ENCODE measurements at regions of chr18 and their contacts with region 1.

Region 1: GRCh38 chr18:46411867-46412690 is 244.9 kb downstream of the LOXHD1 start:
- DNase-seq: no peak
- H3K4me3 ChIP-seq: no peak overlapping the region; a peak in 1 of 8 replicates
- H3K27ac ChIP-seq: no peak overlapping the region
- H3K4me1 ChIP-seq: peaks cover 20 to 38% (median 26%) of the 10 kb centered on the region in 4 experiments
- H3K27me3 ChIP-seq: no peaks in the 10 kb centered on the region; a peak in 2 of 7 replicates
- CTCF ChIP-seq: no peak
- EP300 ChIP-seq: no peak
- POLR2A ChIP-seq: no peak
- RAD21 ChIP-seq: no peak

Region 2: DNA sequence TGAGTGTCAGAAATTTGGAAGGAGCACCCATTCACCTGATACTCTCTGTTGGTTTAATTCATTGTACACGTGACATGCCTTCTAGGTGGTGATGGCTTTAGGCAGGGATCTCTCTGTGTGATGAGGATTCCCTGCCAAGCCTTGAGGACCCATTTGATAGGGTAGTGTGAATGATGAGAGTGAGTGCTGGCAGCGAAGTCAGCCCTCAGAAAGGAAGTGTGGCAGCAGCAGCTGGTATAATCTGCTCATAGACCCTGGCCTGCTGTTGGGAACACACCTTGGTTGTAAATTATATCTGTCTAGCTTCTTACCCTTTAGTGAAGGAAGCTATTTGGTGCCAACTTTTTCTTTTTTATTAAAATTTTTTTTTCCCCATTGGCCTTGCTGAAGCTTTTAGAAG is 143.4 kb before region 1 on chr18:
- CTCF ChIA-PET with region 1: no interaction called
- POLR2A ChIA-PET with region 1: no interaction called
- DNase-seq: no peak
- H3K4me3 ChIP-seq: no peak overlapping the region
- H3K27ac ChIP-seq: 0 out of 2 replicates have a peak overlapping the region, but pooled peaks have one; percentile 2
- H3K4me1 ChIP-seq: peaks cover 6 to 20% (median 15%) of the 10 kb centered on the region in 4 experiments
- H3K27me3 ChIP-seq: no peaks in the 10 kb centered on the region
- CTCF ChIP-seq: no peak
- EP300 ChIP-seq: no peak
- POLR2A ChIP-seq: no peak
- RAD21 ChIP-seq: no peak

Region 3: GRCh38 chr18:46433121-46433826 is 21.2 kb after region 1 on chr18:
- CTCF ChIA-PET with region 1: interaction called, 33 read pairs
- POLR2A ChIA-PET with region 1: interaction called, 8 read pairs
- DNase-seq: peak; percentile 46 to 94
- H3K4me3 ChIP-seq: peak overlapping the region in 3 of 4 experiments; percentile 17 to 49 (median 49); a peak in 5 of 8 replicates
- H3K27ac ChIP-seq: no peak overlapping the region
- H3K4me1 ChIP-seq: peaks cover 0 to 17% (median 9%) of the 10 kb centered on the region in 4 experiments; a peak in 6 of 7 replicates
- H3K27me3 ChIP-seq: no peaks in the 10 kb centered on the region
- CTCF ChIP-seq: no peak
- EP300 ChIP-seq: no peak
- POLR2A ChIP-seq: no peak
- RAD21 ChIP-seq: peak in 1 of 2 experiments; percentile 0; a peak in 1 of 4 replicates

Region 4: GRCh38 chr18:46462523-46462922 is 50.4 kb after region 1 on chr18:
- CTCF ChIA-PET with region 1: interaction called, 29 read pairs
- POLR2A ChIA-PET with region 1: interaction called, 4 read pairs
- DNase-seq: no peak
- H3K4me3 ChIP-seq: no peak overlapping the region
- H3K27ac ChIP-seq: no peak overlapping the region
- H3K4me1 ChIP-seq: peaks cover 10 to 25% (median 17%) of the 10 kb centered on the region in 4 experiments
- H3K27me3 ChIP-seq: no peaks in the 10 kb centered on the region
- CTCF ChIP-seq: no peak
- EP300 ChIP-seq: no peak
- POLR2A ChIP-seq: no peak
- RAD21 ChIP-seq: no peak

Region 5: DNA sequence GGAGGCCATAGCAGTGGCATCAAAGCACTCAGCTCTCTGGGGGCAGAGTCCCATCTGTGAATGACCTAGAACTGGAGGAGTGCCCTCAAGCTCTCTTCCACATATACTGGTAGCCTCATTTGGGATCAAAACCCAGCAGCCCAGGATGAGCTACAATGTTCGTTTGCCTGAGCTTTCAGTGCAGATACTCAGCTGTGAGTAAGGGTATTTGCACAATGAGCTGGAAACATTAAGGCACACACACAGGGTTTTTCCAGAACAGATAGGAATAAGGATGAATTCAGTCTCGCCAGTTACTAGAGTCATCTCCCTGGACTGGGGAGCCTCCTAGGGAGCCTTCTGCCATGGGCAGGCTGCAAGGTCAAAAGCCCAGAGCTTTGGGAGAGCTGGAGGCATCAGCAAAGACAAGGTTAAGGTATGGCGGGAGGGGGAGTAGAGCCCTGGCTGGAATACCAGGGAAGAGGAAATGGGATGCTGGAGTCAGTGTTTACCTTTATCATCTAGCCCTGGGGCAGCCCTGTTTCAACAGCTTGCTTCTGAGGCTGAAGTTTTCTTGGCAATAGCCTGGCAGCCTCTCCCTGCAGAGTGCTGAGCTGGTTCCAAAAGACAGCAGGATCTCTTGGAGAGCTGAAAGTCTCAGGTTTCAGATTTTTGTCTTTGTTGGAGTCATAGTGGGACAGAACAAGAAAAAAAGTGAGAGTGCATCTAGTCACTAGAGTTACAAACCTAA is 57.3 kb after region 1 on chr18:
- CTCF ChIA-PET with region 1: interaction called, 10 read pairs
- POLR2A ChIA-PET with region 1: interaction called, 4 read pairs
- DNase-seq: no peak
- H3K4me3 ChIP-seq: no peak overlapping the region
- H3K27ac ChIP-seq: no peak overlapping the region
- H3K4me1 ChIP-seq: peaks cover 5 to 11% (median 6%) of the 10 kb centered on the region in 4 experiments; a peak in 4 of 7 replicates
- H3K27me3 ChIP-seq: peaks cover 0 to 1% (median 0%) of the 10 kb centered on the region in 4 experiments; a peak in 1 of 7 replicates
- CTCF ChIP-seq: no peak
- EP300 ChIP-seq: no peak
- POLR2A ChIP-seq: no peak
- RAD21 ChIP-seq: no peak

Region 6: DNA sequence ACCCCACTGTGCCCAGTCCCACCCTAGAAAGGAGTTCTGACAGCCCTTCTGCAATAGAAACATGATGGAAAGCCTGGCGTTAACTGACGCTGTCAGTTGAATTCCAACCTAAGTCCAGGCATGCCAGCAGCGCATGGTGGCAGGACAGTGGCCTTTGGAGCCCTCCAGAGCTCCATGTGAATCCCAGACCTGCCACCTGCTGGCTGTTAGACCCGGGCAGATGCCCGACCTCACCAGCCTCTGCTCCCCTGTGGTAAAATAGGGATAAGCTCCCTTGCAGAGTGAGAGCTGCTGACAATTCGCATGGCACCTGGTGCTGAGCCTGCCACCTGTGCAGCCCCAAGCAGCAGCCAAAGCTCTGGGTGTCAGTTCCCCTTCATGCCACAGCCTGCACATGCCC is 106.4 kb after region 1 on chr18:
- CTCF ChIA-PET with region 1: interaction called, 14 read pairs
- POLR2A ChIA-PET with region 1: no interaction called
- DNase-seq: no peak
- H3K4me3 ChIP-seq: no peak overlapping the region
- H3K27ac ChIP-seq: no peak overlapping the region
- H3K4me1 ChIP-seq: no peaks in the 10 kb centered on the region
- H3K27me3 ChIP-seq: no peaks in the 10 kb centered on the region; a peak in 2 of 7 replicates
- CTCF ChIP-seq: peak; percentile 26 to 63 (median 47)
- EP300 ChIP-seq: no peak
- POLR2A ChIP-seq: no peak
- RAD21 ChIP-seq: peak; percentile 52 to 73

Region 7: DNA sequence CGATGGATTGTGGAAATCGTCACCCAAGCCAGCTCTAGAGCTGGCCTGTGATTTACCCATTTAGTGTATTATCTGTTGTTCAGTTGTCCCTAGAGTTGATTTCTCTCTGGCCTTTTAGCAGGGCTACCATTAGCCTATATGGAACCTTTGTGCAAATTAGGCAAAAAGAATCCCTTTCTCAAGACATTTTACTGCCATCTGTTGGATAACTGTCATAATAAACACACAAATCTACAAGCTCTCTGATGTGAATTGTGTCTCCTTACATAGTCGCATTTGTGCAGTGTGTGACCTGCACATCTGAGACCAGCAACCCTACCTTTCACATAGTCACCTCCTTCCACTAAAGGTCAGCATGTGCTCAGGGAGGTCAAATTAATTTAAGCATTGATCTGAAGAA is 210.9 kb after region 1 on chr18:
- CTCF ChIA-PET with region 1: interaction called, 12 read pairs
- POLR2A ChIA-PET with region 1: no interaction called
- DNase-seq: no peak
- H3K4me3 ChIP-seq: no peak overlapping the region
- H3K27ac ChIP-seq: no peak overlapping the region
- H3K4me1 ChIP-seq: peaks cover 0 to 3% (median 0%) of the 10 kb centered on the region in 4 experiments; a peak in 1 of 7 replicates
- H3K27me3 ChIP-seq: no peaks in the 10 kb centered on the region
- CTCF ChIP-seq: peak in 2 of 3 experiments; percentile 4 to 19; a peak in 2 of 4 replicates
- EP300 ChIP-seq: no peak
- POLR2A ChIP-seq: no peak
- RAD21 ChIP-seq: peak; percentile 41 to 47

Measured in H1 (cell line).